OCI-LY7 (cell line): ENCODE measurements at regions of chr2 and their contacts with region 1.

Region 1: GRCh38 chr2:17470855-17471641 is 47.2 kb downstream of the RAD51AP2 start:
- DNase-seq: peak; percentile 48
- H3K4me3 ChIP-seq: no peak overlapping the region
- H3K27ac ChIP-seq: no peak overlapping the region
- H3K4me1 ChIP-seq: no peaks in the 10 kb centered on the region
- CTCF ChIP-seq: peak; percentile 87

Region 2: DNA sequence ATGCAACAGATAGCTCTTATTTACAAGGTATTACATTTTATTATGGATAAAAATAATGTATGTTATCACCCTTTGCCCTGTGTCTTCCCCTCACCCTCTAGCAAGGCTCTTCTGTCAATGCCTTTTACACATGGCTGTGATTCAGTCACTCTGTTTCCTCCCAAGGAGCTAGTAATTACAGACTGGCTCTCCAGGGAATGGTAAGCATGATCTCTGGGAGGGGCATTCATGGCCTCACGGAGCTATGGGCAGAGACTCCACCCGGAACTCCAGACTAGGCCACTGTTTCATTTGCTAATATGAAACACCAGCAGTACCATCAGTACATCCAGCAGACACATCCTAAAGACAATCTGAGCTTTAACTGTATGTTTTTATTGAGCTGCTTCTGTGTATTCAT is 394.5 kb before region 1 on chr2:
- CTCF ChIA-PET with region 1: no interaction called
- POLR2A ChIA-PET with region 1: no interaction called
- intact Hi-C with region 1: no loop called
- DNase-seq: no peak
- H3K4me3 ChIP-seq: no peak overlapping the region
- H3K27ac ChIP-seq: no peak overlapping the region
- H3K4me1 ChIP-seq: no peaks in the 10 kb centered on the region
- CTCF ChIP-seq: no peak

Region 3: GRCh38 chr2:17429130-17429529 is 41.9 kb before region 1 on chr2:
- CTCF ChIA-PET with region 1: no interaction called
- POLR2A ChIA-PET with region 1: no interaction called
- intact Hi-C with region 1: no loop called
- DNase-seq: no peak
- H3K4me3 ChIP-seq: no peak overlapping the region
- H3K27ac ChIP-seq: no peak overlapping the region
- H3K4me1 ChIP-seq: no peaks in the 10 kb centered on the region
- CTCF ChIP-seq: no peak

Region 4: DNA sequence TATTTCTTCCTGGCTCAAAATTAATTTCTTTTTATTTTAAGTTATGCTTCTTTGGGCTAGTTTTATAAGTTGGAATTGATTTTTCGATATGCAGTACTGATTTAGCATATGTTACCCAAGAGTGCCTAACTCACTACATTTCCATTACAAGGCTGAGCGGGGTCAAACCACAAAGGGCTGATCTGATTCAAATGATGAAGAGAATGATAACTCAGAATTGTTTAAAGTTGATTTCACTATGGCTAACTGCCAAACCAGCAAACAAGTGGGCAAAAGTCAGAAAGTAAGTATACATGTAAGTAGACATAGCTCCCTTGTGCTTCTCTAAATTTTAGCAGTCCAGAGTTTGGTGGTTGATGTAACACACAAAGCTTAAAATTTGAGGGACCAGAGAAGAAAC is 11.6 kb after region 1 on chr2:
- CTCF ChIA-PET with region 1: no interaction called
- POLR2A ChIA-PET with region 1: no interaction called
- intact Hi-C with region 1: no loop called
- DNase-seq: no peak
- H3K4me3 ChIP-seq: no peak overlapping the region
- H3K27ac ChIP-seq: no peak overlapping the region
- H3K4me1 ChIP-seq: no peaks in the 10 kb centered on the region
- CTCF ChIP-seq: no peak

Region 5: DNA sequence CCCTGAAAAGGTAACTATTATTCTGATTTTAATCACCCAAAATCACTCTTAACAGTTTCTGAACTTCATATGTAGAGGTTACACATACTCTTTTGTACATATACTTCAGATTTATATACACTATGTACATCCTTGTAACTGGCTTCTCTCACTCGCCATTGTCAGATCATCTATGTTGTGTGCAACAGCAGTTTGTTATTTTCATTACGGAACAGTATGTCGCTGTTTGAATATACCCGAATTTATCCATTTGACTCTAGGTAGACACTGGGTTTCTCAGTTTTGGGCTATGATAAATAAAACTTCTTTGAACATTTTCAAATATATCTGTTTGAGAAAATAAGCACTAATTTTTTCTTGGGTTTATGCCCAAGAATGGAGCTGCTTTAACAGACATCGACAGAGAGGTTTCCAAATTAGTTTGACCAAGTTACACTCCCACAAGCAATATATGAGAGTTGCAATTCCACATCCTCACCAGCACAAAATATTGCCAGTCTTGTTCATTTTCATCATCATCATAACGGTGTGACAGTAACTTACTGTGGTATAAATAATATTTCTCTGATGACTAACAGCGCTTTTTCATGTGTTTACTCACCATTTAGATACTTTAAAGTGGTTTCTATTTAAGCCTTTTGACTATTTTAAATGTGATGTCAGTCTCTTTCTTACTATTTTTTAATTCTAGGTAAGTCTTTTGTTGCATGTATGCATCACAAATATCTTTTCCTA is 201.7 kb after region 1 on chr2:
- CTCF ChIA-PET with region 1: no interaction called
- POLR2A ChIA-PET with region 1: no interaction called
- intact Hi-C with region 1: loop called (anchors 1 kb)
- DNase-seq: no peak
- H3K4me3 ChIP-seq: no peak overlapping the region
- H3K27ac ChIP-seq: no peak overlapping the region
- H3K4me1 ChIP-seq: no peaks in the 10 kb centered on the region
- CTCF ChIP-seq: no peak

Region 6: DNA sequence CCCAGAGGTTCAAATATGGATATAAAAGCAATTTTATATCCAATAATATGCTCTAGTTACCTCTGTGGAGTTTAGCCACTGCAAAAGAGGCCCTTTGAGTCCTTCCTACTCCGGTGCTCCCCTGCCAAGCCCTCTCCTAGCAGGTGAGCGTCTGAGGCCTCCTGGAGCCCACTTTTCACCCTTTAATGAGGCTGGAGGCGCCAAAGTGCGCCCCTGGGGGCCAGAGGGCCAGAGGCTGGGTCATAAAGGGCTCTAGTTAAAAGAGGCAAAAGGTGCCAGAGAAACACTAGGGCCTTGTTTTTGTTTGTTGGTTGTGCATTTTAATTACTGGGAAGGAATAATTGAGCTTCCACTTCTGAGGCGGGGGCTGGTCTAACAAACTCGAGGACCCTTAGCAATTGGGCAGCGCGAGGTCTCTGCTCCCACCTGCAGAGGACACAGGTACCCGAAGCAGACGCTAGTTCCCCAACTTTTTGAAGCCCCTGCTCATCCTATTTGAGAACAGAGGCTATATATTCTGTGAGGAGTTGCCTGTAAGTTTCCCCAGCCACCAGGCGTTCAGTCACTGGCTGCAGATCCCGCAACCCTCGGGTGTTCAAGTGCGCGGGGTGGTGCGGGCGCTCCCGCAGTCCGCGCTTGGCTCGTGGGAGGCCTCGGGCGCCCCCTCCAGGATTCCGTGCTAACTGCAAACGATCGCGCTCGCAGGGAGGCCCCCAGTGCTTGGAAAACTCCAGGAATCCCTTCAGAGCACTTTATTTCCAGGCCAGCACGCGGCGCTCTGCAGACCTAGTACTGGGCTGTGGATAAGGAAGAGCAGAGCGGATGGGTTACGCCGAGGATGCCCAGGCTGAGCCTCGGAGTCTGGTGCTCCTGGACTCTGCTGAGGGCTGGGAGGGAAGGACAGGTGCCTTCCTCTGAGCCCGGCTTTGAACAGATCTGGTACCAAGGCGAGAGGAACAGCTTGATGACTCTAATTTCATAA is 359.3 kb after region 1 on chr2:
- CTCF ChIA-PET with region 1: no interaction called
- POLR2A ChIA-PET with region 1: no interaction called
- intact Hi-C with region 1: loop called (anchors 10 kb)
- DNase-seq: peak; percentile 8
- H3K4me3 ChIP-seq: no peak overlapping the region
- H3K27ac ChIP-seq: no peak overlapping the region
- H3K4me1 ChIP-seq: no peaks in the 10 kb centered on the region
- CTCF ChIP-seq: peak; percentile 81

Region 7: GRCh38 chr2:18378020-18378653 is 907.1 kb after region 1 on chr2:
- CTCF ChIA-PET with region 1: no interaction called
- POLR2A ChIA-PET with region 1: no interaction called
- intact Hi-C with region 1: loop called (anchors 10 kb)
- DNase-seq: peak; percentile 52
- H3K4me3 ChIP-seq: no peak overlapping the region
- H3K27ac ChIP-seq: no peak overlapping the region
- H3K4me1 ChIP-seq: no peaks in the 10 kb centered on the region
- CTCF ChIP-seq: peak; percentile 94